ENCODE measurements at regions of chr1 and their contacts with region 1.

Region 1: DNA sequence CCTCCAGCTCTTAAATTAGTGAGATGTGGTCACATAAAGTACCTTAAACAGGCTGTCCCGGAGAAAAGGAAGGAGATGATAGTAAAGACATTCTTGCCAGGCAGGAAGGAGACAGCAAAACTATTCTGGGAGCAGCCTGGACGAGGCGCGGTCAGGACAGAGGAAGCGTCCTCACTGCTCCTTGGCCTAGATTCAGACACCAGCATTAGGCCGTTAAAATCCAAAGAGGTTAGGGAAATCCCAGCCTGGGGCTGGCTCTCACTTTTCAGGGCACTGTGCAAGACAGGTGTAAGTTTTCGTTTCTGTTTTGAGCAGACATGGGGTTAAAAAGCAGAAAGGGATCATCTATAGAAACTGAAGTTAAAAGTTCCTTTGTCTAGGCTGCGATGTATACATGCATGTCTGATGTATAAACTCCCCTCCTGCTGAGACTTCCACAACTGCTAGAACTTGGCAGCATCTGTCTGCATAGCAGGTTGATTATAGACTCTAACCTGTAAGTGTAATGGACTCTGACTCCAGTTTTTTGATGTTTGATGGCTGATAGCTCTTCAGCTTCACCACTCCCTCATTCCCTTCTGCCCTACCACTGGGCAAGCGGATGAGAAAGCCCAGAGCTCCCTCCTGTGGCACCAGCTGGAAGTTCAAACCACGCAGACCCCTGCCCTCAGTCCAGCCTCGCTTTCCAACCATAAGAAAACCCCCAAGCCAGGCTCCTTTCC is 21.5 kb downstream of the STPG1 start:
- H3K4me3 ChIP-seq: no peak overlapping the region
- H3K27ac ChIP-seq: no peak overlapping the region
- H3K4me1 ChIP-seq: no peaks in the 10 kb centered on the region
- CTCF ChIP-seq: peak; percentile 72

Region 2: GRCh38 chr1:24186993-24187805 is 204.8 kb before region 1 on chr1 and contains the start of gene IFNLR1:
- CTCF ChIA-PET with region 1: interaction called, 31 read pairs
- POLR2A ChIA-PET with region 1: interaction called, 3 read pairs
- H3K4me3 ChIP-seq: peak within 1 kb of the TSS; percentile 69
- H3K27ac ChIP-seq: peak within 1 kb of the TSS; percentile 82
- H3K4me1 ChIP-seq: peaks cover 3% of the 10 kb centered on the region
- CTCF ChIP-seq: no peak

Region 3: GRCh38 chr1:24216276-24217074 is 175.6 kb before region 1 on chr1:
- CTCF ChIA-PET with region 1: interaction called, 20 read pairs
- POLR2A ChIA-PET with region 1: no interaction called
- H3K4me3 ChIP-seq: no peak overlapping the region
- H3K27ac ChIP-seq: no peak overlapping the region
- H3K4me1 ChIP-seq: peaks cover 6% of the 10 kb centered on the region; the same call in 1 of the 2 replicates
- CTCF ChIP-seq: no peak

Region 4: DNA sequence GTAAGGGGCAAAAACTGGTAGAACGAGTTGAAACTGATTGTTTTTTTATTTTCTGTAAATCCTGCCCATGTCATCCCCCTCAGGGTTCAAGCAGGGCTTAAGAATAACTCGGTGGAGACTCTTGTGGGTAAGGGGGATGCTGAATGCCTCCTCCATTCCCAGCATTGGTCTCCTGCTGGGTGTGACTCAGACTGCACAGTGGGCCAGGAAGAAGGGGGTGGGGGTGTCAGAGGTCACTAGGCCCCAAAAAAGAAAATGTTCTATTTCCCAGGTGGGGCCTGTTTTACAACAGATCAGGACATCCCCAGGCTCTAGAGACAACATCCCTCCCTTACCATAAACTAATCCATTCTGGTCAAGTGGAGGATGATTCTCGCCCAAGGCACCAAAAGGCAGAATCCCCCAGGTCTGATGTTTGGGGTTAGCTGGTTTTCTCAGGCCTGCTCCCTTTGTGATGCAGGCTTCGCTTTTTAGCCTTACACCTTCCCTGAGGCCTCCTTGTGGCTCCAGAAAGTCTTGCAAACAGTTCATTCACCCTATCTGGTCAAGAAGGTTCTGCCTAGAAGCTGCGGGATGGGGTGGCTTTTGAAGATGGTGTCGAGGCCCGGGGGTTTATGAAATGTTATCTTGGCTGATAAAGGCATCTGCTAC is 83.6 kb before region 1 on chr1:
- CTCF ChIA-PET with region 1: interaction called, 23 read pairs
- POLR2A ChIA-PET with region 1: no interaction called
- H3K4me3 ChIP-seq: no peak overlapping the region
- H3K27ac ChIP-seq: no peak overlapping the region
- H3K4me1 ChIP-seq: no peaks in the 10 kb centered on the region
- CTCF ChIP-seq: no peak

Region 5: GRCh38 chr1:24403806-24404205 is 11.8 kb after region 1 on chr1:
- CTCF ChIA-PET with region 1: interaction called, 24 read pairs
- POLR2A ChIA-PET with region 1: no interaction called
- H3K4me3 ChIP-seq: no peak overlapping the region
- H3K27ac ChIP-seq: no peak overlapping the region
- H3K4me1 ChIP-seq: no peaks in the 10 kb centered on the region; the same call in 1 of the 2 replicates
- CTCF ChIP-seq: no peak

Region 6: GRCh38 chr1:24586970-24587820 is 195.2 kb after region 1 on chr1:
- CTCF ChIA-PET with region 1: interaction called, 14 read pairs
- POLR2A ChIA-PET with region 1: no interaction called
- H3K4me3 ChIP-seq: no peak overlapping the region
- H3K27ac ChIP-seq: no peak overlapping the region
- H3K4me1 ChIP-seq: no peaks in the 10 kb centered on the region
- CTCF ChIP-seq: peak; percentile 73

Measured in HEK293 (cell line).